ENCODE measurements at regions of chr1 and their contacts with region 1.

Region 1: GRCh38 chr1:40404670-40405462 is 31.3 kb downstream of the SMAP2 start:
- DNase-seq: peak; percentile 47
- H3K4me3 Mint-ChIP-seq: no peak overlapping the region
- H3K27ac Mint-ChIP-seq: peak overlapping the region; percentile 17
- H3K4me1 Mint-ChIP-seq: peaks cover 54% of the 10 kb centered on the region
- H3K27me3 Mint-ChIP-seq: no peaks in the 10 kb centered on the region

Region 2: GRCh38 chr1:40153073-40153770 is 251.6 kb before region 1 on chr1:
- CTCF ChIA-PET with region 1: interaction called, 22 read pairs
- POLR2A ChIA-PET with region 1: interaction called, 4 read pairs
- DNase-seq: peak; percentile 37
- H3K4me3 Mint-ChIP-seq: no peak overlapping the region
- H3K27ac Mint-ChIP-seq: no peak overlapping the region
- H3K4me1 Mint-ChIP-seq: peaks cover 6% of the 10 kb centered on the region
- H3K27me3 Mint-ChIP-seq: peaks cover 5% of the 10 kb centered on the region

Region 3: GRCh38 chr1:40352126-40352525 is 52.7 kb before region 1 on chr1:
- CTCF ChIA-PET with region 1: interaction called, 10 read pairs
- POLR2A ChIA-PET with region 1: no interaction called
- DNase-seq: no peak
- H3K4me3 Mint-ChIP-seq: no peak overlapping the region
- H3K27ac Mint-ChIP-seq: no peak overlapping the region
- H3K4me1 Mint-ChIP-seq: no peaks in the 10 kb centered on the region
- H3K27me3 Mint-ChIP-seq: no peaks in the 10 kb centered on the region

Region 4: DNA sequence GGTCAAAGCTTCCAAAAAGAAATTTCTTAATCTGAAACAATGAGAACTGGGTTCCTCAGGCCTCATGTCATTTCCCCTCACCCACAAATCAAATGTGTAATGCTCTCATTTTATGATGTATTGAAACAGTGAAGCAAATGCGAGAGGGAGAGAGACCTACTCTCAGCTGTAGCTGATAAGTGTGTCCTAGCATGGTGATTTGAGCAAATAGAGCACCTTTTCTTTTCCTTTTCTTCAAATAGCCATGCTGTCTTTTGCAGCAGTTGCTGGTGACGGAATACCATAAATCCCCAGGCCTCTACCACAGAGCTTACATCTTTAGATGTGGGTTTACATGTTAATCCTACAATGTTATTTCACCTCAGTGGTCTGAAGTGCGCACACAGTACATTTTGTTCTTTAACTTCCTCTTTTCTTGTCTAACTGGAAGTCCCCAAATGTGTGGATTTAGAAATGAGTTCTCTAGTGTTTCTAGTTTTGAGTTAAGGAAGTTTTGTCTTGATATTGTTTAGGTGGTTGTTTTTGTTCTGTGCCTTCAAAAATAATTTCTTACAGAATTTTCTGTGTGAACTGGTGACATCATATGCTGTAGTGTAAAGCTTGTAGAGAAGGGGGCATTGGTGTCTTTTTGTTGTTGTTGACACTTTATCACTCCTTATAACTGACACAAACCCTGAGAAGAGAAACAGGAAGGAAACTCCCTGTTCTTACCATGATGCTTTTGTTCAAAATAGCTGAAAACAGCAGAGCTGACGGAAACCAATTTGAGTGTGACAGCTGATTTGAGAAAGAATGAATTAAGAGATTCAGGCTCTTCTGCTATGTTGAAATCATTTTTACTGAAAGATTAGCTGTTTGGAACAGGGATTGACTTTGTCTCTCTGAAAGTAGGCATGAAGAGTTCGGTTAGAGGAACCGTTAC is 19.2 kb before region 1 on chr1:
- CTCF ChIA-PET with region 1: interaction called, 37 read pairs
- POLR2A ChIA-PET with region 1: interaction called, 997 read pairs
- DNase-seq: peak; percentile 59
- H3K4me3 Mint-ChIP-seq: peak overlapping the region; percentile 70
- H3K27ac Mint-ChIP-seq: peak overlapping the region; percentile 99
- H3K4me1 Mint-ChIP-seq: peaks cover 91% of the 10 kb centered on the region
- H3K27me3 Mint-ChIP-seq: no peaks in the 10 kb centered on the region

Measured in activated CD4-positive, alpha-beta memory T cell treated with anti-CD3 and anti-CD28 coated beads, Interleukin-2, amount 10 ng/mL, durations not matched to agents 7 days and 5 days (primary cell).